Calu3 (cell line): ENCODE measurements at regions of chr6 and their contacts with region 1.

Region 1: GRCh38 chr6:75208298-75209183 is 2.7 kb upstream of the COL12A1 start:
- DNase-seq: peak; percentile 85
- H3K4me3 Mint-ChIP-seq: peak overlapping the region; percentile 14
- H3K27ac Mint-ChIP-seq: no peak overlapping the region
- H3K4me1 Mint-ChIP-seq: peaks cover 37% of the 10 kb centered on the region
- H3K27me3 Mint-ChIP-seq: peaks cover 32% of the 10 kb centered on the region
- CTCF ChIP-seq: peak; percentile 78

Region 2: DNA sequence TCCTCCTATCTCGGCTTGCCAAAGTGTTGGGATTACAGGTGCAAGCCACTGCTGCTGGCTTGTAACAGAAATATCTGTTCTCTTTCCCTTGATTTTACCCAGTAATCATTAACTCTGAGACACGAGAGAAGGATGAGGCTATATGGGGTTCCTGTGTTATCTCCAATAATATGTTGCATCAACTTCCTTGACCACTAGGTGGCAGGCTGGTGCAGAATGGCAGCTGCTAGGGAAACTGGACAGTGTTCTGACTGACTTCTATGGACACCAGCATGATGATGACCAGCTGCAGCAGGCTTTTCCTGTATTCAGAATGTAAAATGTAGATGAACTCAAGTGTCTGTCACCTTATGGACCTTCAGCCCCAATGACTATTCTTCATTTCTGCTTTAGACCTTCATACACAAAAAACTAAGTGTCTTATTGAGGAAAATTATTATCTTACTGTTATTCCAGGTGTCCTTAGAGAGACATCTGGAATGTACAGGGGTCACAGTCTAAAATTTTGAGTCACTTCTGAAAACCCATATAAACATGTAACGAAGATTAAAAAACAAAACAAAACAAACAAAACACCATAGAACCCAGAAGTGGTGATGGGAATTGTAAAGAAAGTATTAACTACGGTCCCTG is 1533.0 kb before region 1 on chr6:
- CTCF ChIA-PET with region 1: interaction called, 3 read pairs
- intact Hi-C with region 1: loop called (anchors 5 kb)
- DNase-seq: peak; percentile 85
- H3K4me3 Mint-ChIP-seq: no peak overlapping the region
- H3K27ac Mint-ChIP-seq: no peak overlapping the region
- H3K4me1 Mint-ChIP-seq: peaks cover 19% of the 10 kb centered on the region
- H3K27me3 Mint-ChIP-seq: no peaks in the 10 kb centered on the region
- CTCF ChIP-seq: peak; percentile 92

Region 3: DNA sequence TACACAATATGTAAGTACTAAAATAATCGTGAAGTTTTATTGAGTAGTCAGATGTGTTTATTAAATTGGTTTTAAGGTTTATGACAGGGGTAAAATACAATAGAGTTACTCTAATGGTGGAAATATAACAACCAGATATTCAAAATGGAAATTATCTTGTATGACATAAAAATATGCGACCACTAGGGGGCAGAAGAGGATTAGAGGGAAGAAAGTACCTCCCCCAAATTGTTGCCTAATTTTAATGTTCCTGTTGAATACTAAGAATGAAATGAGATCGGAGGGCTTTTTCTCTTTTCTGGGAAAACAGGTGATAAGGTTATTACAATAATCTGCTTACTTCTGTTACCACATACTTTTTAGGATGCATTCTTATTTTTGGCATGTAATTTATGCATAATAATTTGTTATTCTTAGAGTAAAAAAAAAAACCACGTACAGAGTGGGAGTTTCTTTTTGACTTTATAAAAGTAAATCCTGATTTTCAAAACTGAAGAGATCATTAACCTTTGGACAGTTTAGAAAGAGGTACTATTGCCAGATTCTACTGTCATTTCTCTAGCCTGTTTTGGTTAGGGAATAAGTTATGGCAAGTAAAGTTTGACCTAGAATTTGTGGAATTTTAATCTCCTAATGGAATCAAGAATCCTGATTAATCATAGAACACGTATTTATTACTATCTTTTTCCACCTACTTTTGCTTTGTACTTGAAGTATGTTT is 1353.4 kb before region 1 on chr6:
- CTCF ChIA-PET with region 1: interaction called, 3 read pairs
- intact Hi-C with region 1: loop called (anchors 1 kb)
- DNase-seq: peak; percentile 49
- H3K4me3 Mint-ChIP-seq: no peak overlapping the region
- H3K27ac Mint-ChIP-seq: no peak overlapping the region
- H3K4me1 Mint-ChIP-seq: no peaks in the 10 kb centered on the region
- H3K27me3 Mint-ChIP-seq: no peaks in the 10 kb centered on the region
- CTCF ChIP-seq: peak; percentile 69

Region 4: DNA sequence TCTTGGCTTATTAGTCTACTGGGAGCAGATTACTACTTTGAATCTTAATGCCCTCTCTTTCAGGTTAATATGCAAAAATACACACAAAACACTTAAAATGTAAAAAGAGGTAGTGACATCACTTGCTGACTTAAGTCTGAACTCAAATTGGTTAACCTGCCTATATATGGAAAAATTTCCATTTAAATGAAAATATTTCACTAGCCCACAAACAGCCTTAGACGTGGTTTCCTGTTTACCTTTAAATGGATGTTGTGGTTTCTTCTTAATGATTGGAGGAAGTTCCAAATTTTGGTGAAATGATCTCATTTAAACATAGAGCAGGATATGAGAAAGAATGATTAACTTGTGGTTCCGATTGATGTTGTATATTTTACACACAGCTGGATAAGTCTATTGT is 958.9 kb before region 1 on chr6:
- CTCF ChIA-PET with region 1: no interaction called
- intact Hi-C with region 1: loop called (anchors 10 kb)
- DNase-seq: no peak
- H3K4me3 Mint-ChIP-seq: no peak overlapping the region
- H3K27ac Mint-ChIP-seq: peak overlapping the region; percentile 78
- H3K4me1 Mint-ChIP-seq: peaks cover 48% of the 10 kb centered on the region
- H3K27me3 Mint-ChIP-seq: no peaks in the 10 kb centered on the region
- CTCF ChIP-seq: no peak

Region 5: GRCh38 chr6:74574794-74575193 is 633.7 kb before region 1 on chr6:
- CTCF ChIA-PET with region 1: no interaction called
- intact Hi-C with region 1: loop called (anchors 1 kb)
- DNase-seq: peak; percentile 18
- H3K4me3 Mint-ChIP-seq: no peak overlapping the region
- H3K27ac Mint-ChIP-seq: peak overlapping the region; percentile 54
- H3K4me1 Mint-ChIP-seq: peaks cover 18% of the 10 kb centered on the region
- H3K27me3 Mint-ChIP-seq: no peaks in the 10 kb centered on the region
- CTCF ChIP-seq: peak; percentile 71

Region 6: GRCh38 chr6:74939151-74939708 is 269.3 kb before region 1 on chr6:
- CTCF ChIA-PET with region 1: no interaction called
- intact Hi-C with region 1: loop called (anchors 5 kb)
- DNase-seq: no peak
- H3K4me3 Mint-ChIP-seq: no peak overlapping the region
- H3K27ac Mint-ChIP-seq: no peak overlapping the region
- H3K4me1 Mint-ChIP-seq: no peaks in the 10 kb centered on the region
- H3K27me3 Mint-ChIP-seq: no peaks in the 10 kb centered on the region
- CTCF ChIP-seq: no peak